ENCODE measurements at regions of chr10 and their contacts with region 1.

Region 1: GRCh38 chr10:109883859-109884771 is 39.2 kb downstream of the XPNPEP1 start:
- DNase-seq: peak; percentile 75 to 81
- H3K4me3 ChIP-seq: no peak overlapping the region
- H3K27ac ChIP-seq: peak overlapping the region; percentile 53 to 81 (median 67)
- H3K4me1 ChIP-seq: peaks cover 21 to 29% of the 10 kb centered on the region in 2 donors
- H3K27me3 ChIP-seq: no peaks in the 10 kb centered on the region
- CTCF ChIP-seq: peak; percentile 82 to 99 (median 98)
- POLR2A ChIP-seq: peak in 1 of 2 donors; percentile 4

Region 2: DNA sequence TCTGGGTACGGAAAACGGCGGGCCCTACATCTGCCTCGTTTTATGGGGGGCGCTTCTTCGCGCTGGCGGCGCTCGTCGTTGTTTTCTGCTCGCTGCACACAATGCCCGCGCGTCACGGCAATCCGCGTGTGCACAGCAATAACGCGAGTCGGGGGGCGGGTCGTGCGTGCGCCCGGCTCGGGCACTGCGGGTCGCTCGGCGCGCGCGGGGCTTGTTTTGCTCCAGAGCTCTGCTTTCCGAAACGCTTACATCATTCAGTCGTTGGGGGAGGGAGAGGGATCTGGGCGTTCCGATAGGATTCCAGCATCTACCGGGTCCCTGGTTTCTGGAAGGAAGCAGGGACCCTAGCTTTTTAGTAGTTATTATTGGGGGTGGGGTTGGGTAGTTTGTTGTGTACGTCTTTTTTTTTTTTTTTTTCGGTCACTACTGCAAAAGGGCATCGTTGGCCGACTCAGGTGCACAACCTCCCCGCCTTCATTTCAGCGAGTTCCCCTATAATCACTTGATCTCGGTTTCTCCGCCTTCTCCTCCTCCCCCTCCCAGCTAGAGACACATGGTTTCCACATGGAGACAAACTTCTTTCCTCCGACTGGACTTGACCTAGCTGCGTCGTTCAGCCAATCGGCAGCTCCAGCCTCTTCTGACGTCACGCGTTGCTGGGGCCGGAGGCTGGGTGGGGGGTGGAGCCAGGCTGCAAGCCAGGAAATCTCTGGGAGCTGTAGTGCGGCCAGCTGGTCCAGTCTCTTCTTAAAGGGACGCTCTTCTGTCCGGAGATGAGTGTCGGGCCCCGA is 326.8 kb after region 1 on chr10:
- intact Hi-C with region 1: loop called (anchors 5 kb)
- DNase-seq: peak; percentile 95 to 96
- H3K4me3 ChIP-seq: peak overlapping the region; percentile 63 to 87 (median 76)
- H3K27ac ChIP-seq: peak overlapping the region; percentile 32 to 87 (median 67)
- H3K4me1 ChIP-seq: peaks cover 6 to 11% of the 10 kb centered on the region in 2 donors
- H3K27me3 ChIP-seq: no peaks in the 10 kb centered on the region
- CTCF ChIP-seq: peak in 2 of 6 experiments; percentile 8
- POLR2A ChIP-seq: peak in 1 of 2 donors; percentile 70

Region 3: DNA sequence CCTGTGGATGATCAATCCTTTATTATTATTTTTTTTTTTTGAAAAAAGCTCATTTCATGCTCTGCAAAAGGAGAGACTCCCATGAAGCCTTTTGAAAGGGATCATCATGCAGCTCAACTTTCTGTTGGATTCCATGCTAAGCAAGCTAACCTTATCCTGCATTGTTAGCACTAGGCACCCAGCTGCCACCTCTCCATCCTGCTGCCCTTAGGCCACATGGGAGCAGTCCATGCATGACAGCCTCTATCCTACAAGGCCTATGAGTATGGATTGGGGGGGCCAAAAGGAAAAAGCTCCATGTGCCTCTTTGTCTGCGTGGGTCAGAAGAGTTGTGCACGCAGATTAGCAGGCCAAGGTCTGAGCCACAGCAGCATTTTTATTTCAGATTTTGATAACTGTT is 401.4 kb after region 1 on chr10:
- intact Hi-C with region 1: loop called (anchors 10 kb)
- DNase-seq: no peak
- H3K4me3 ChIP-seq: no peak overlapping the region
- H3K27ac ChIP-seq: no peak overlapping the region
- H3K4me1 ChIP-seq: peaks cover 3 to 5% of the 10 kb centered on the region in 2 donors
- H3K27me3 ChIP-seq: no peaks in the 10 kb centered on the region
- CTCF ChIP-seq: no peak
- POLR2A ChIP-seq: no peak